ENCODE measurements at regions of chr3 and their contacts with region 1.

Region 1: GRCh38 chr3:16842272-16843270 is 42.2 kb upstream of the PLCL2 start:
- DNase-seq: peak in 1 of 2 donors; percentile 32
- ATAC-seq: peak in 7 of 8 donors; percentile 33 to 66 (median 53)
- H3K4me3 ChIP-seq: peak overlapping the region in 1 of 10 donors; percentile 22
- H3K27ac ChIP-seq: peak overlapping the region in 5 of 10 donors; percentile 11 to 86 (median 30)
- H3K4me1 ChIP-seq: peaks cover 0 to 73% (median 16%) of the 10 kb centered on the region in 9 donors
- H3K27me3 ChIP-seq: no peaks in the 10 kb centered on the region
- CTCF ChIP-seq: no peak

Region 2: DNA sequence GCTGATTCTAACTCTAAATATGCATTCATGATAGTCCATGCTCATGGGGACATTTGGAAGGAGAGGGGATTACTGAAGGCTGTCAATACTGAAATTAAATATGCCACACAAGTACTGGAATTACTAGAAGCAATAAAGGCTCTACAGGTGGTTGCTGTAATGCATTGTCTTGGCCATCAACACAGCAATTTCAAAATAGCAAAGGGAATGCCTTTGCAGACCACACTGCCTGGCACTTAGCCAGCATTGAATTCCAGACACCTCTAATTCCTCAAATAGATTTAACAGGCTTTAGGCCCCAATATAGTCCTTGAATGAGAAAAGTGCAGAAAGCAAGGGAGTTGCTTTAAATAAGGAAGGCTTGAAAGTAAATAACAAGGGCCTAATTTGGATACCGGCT is 73.6 kb before region 1 on chr3:
- intact Hi-C with region 1: loop called in 3 of 10 experiments (anchors 5 to 10 kb)
- DNase-seq: no peak
- ATAC-seq: peak in 1 of 8 donors; percentile 18
- H3K4me3 ChIP-seq: no peak overlapping the region
- H3K27ac ChIP-seq: peak overlapping the region; percentile 40 to 90 (median 75)
- H3K4me1 ChIP-seq: peaks cover 0 to 43% (median 22%) of the 10 kb centered on the region in 9 donors
- H3K27me3 ChIP-seq: no peaks in the 10 kb centered on the region
- CTCF ChIP-seq: no peak

Region 3: DNA sequence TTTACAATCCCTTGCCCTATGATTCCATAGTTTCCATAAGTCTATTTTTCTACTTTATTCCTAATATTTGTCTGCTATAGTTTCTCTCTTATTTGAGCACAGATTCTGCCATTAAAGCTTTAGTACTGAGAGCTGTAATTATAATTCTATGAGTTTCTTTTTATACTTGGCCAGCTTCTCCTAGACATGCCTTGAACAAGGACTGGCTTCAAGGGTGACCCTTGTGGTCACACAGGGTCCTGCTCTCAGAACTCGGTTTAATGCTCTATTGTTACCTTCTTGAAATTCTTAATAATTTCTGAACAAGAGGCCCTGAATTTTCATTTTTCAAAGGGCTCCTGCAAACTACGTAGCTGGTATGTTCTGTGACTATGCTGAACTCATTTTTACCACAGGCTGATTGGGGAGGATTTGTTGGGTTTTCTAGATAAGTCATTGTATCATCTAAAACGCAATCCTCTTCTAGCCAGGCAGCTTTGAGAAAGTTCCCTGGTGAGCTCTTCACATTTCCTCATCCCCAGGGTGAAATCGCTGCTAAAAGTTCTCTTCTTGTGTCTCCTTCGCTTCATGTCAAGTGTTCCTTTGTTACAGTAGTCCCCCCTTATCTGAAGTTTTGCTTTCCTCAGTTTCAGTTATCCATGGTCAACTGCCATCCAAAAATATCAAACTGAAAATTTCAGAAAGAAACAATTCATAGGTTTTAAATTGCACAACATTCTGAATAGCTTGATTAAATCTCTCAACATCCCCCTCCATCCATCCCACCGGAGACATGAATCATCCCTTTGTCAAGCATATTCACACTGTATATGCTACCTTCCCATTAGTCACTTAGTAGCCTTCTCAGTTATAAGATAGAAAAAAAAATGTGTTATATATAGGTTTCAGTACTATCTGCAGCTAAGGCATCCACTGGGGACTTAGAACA is 29.6 kb after region 1 on chr3:
- intact Hi-C with region 1: loop called in 1 of 10 experiments (anchors 5 kb)
- DNase-seq: no peak
- ATAC-seq: no peak
- H3K4me3 ChIP-seq: no peak overlapping the region
- H3K27ac ChIP-seq: no peak overlapping the region
- H3K4me1 ChIP-seq: peaks cover 0 to 46% (median 0%) of the 10 kb centered on the region in 9 donors
- H3K27me3 ChIP-seq: no peaks in the 10 kb centered on the region
- CTCF ChIP-seq: no peak

Region 4: GRCh38 chr3:16897254-16897926 is 54.8 kb after region 1 on chr3:
- intact Hi-C with region 1: no loop called
- DNase-seq: no peak
- ATAC-seq: no peak
- H3K4me3 ChIP-seq: peak overlapping the region in 4 of 10 donors; percentile 0 to 17 (median 10)
- H3K27ac ChIP-seq: peak overlapping the region; percentile 37 to 84 (median 60)
- H3K4me1 ChIP-seq: peaks cover 0 to 71% (median 55%) of the 10 kb centered on the region in 9 donors
- H3K27me3 ChIP-seq: no peaks in the 10 kb centered on the region
- CTCF ChIP-seq: no peak

Region 5: DNA sequence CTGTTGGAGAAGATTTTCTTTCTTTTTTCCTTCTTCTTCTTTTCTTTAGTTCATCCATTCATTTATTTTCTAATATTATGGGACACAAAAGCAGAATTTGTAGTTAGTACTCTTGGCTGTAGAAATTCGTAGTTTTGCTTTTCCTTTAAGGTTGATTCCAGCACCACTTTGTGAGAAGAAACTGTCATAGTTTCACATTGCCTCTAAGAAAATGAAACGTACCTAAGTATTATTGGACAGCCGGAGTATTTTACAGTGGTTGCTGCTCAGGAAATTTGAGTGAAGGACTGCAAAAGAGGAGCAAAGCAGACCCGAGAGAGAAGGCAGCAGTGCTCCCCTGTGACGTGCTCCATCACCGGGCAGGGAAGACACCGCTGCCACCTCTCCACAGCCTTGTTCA is 90.3 kb after region 1 on chr3:
- intact Hi-C with region 1: no loop called
- DNase-seq: no peak
- ATAC-seq: no peak
- H3K4me3 ChIP-seq: no peak overlapping the region
- H3K27ac ChIP-seq: no peak overlapping the region
- H3K4me1 ChIP-seq: peaks cover 0 to 86% (median 69%) of the 10 kb centered on the region in 9 donors
- H3K27me3 ChIP-seq: no peaks in the 10 kb centered on the region
- CTCF ChIP-seq: no peak

Measured in heart right ventricle (tissue), 16 donors.